CD4-positive, alpha-beta T cell (primary cell): ENCODE measurements at regions of chr7 and their contacts with region 1.

Region 1: GRCh38 chr7:12686894-12687717 is at the start of gene ARL4A:
- DNase-seq: peak; percentile 76 to 93 (median 84)
- ATAC-seq: peak; percentile 48
- H3K4me3 ChIP-seq: peak within 1 kb of the TSS; percentile 89
- H3K4me3 Mint-ChIP-seq: peak within 1 kb of the TSS; percentile 96
- H3K27ac ChIP-seq: peak within 1 kb of the TSS; percentile 90 to 98
- H3K27ac Mint-ChIP-seq: peak within 1 kb of the TSS; percentile 89
- H3K4me1 ChIP-seq: peaks cover 24% of the 10 kb centered on the region
- H3K4me1 Mint-ChIP-seq: peaks cover 39% of the 10 kb centered on the region
- H3K27me3 ChIP-seq: no peaks in the 10 kb centered on the region
- H3K27me3 Mint-ChIP-seq: no peaks in the 10 kb centered on the region
- CTCF ChIP-seq: peak; percentile 28
- total RNA-seq, gene ARL4A: 72.5 to 75.9 TPM

Region 2: GRCh38 chr7:12007576-12007975 is 679.5 kb before region 1 on chr7:
- CTCF ChIA-PET with region 1: no interaction called
- POLR2A ChIA-PET with region 1: no interaction called
- intact Hi-C with region 1: no loop called
- DNase-seq: no peak
- ATAC-seq: no peak
- H3K4me3 ChIP-seq: no peak overlapping the region
- H3K4me3 Mint-ChIP-seq: no peak overlapping the region
- H3K27ac ChIP-seq: no peak overlapping the region
- H3K27ac Mint-ChIP-seq: no peak overlapping the region
- H3K4me1 ChIP-seq: no peaks in the 10 kb centered on the region
- H3K4me1 Mint-ChIP-seq: no peaks in the 10 kb centered on the region
- H3K27me3 ChIP-seq: no peaks in the 10 kb centered on the region
- H3K27me3 Mint-ChIP-seq: no peaks in the 10 kb centered on the region
- CTCF ChIP-seq: no peak

Region 3: DNA sequence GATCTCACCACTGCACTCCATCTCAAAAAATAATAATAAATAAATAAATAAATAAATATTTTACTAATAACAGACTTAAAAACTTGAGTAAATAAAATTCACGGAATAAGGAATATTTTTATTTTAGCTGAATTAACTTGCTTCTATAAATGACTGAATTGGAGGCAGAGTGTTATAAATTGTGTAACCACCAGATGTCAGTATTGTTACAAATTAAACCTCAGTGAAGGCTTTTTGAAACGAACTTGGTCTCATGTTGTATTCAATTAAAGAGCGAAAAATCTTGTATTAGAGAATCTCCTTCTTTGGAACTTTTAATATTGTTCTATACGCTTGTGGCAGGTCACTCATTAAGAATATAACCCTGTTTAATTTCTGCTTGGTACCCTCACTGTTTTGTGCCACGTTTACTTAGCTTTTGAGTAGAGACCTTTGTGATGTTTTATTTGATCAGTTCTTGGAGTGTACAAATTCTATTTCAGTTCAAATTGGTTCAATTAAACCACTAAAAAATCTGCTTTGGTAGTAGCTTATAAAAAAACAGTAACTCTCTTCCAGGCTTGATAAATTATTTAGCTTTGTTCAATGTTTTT is 162.2 kb before region 1 on chr7:
- CTCF ChIA-PET with region 1: no interaction called
- POLR2A ChIA-PET with region 1: no interaction called
- intact Hi-C with region 1: loop called (anchors 10 kb)
- DNase-seq: peak in 3 of 14 experiments; percentile 43 to 60 (median 54)
- ATAC-seq: no peak
- H3K4me3 ChIP-seq: no peak overlapping the region
- H3K4me3 Mint-ChIP-seq: no peak overlapping the region
- H3K27ac ChIP-seq: no peak overlapping the region
- H3K27ac Mint-ChIP-seq: no peak overlapping the region
- H3K4me1 ChIP-seq: no peaks in the 10 kb centered on the region
- H3K4me1 Mint-ChIP-seq: no peaks in the 10 kb centered on the region
- H3K27me3 ChIP-seq: peaks cover 0 to 12% of the 10 kb centered on the region in 2 experiments
- H3K27me3 Mint-ChIP-seq: peaks cover 38% of the 10 kb centered on the region
- CTCF ChIP-seq: peak; percentile 80

Region 4: DNA sequence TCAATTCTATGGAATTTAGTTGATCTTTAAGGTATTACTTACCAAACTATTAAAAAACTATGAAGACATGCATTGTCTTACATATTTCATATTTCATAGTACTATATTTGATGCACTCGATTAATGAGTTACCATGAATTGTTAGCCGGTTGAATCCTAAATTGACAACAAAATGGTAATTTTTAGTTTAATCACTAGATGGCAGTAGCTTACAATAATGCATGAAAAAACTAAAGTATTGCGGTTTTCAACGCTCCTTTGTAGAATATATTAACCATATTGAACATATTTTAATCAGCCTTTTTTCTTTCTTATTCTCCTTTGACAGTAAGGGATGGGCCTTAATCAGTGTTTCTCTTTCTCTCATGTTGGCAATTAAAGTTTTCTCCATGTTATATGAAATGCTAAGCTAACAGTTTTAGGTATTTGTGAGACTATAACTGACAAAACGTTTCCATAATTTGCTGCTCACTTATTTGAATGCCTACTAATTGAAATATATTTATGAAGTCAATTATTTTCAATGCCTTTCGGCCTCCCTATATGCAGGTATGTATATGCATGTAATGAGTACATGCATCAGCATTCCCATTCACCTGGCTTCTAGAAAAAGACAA is 48.1 kb before region 1 on chr7:
- CTCF ChIA-PET with region 1: interaction called, 13 read pairs
- POLR2A ChIA-PET with region 1: interaction called, 14 read pairs
- intact Hi-C with region 1: loop called in 1 of 2 experiments (anchors 5 kb)
- DNase-seq: peak in 3 of 14 experiments; percentile 62 to 67 (median 66)
- ATAC-seq: peak; percentile 55
- H3K4me3 ChIP-seq: no peak overlapping the region
- H3K4me3 Mint-ChIP-seq: no peak overlapping the region
- H3K27ac ChIP-seq: no peak overlapping the region
- H3K27ac Mint-ChIP-seq: no peak overlapping the region
- H3K4me1 ChIP-seq: peaks cover 4% of the 10 kb centered on the region
- H3K4me1 Mint-ChIP-seq: peaks cover 29% of the 10 kb centered on the region
- H3K27me3 ChIP-seq: no peaks in the 10 kb centered on the region
- H3K27me3 Mint-ChIP-seq: no peaks in the 10 kb centered on the region
- CTCF ChIP-seq: peak; percentile 81

Region 5: DNA sequence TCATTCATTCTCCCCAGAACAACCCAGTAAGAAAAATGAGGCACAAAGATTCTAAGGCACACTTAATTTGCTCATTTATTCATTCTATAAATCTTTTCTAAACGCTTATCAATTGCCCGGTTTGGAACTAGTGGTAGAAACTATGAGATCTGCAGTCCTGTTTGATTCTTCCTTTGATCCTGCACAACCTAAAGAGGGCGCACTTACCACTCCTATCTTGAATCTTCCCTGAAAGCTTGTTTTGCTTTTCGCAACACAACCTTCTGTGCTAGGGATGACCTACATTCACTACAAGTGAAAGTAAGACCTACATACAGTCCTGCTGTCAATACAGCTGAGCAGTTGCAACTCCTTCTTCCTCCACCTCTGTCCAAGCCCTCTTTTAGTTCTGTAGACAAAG is 12.3 kb before region 1 on chr7:
- CTCF ChIA-PET with region 1: interaction called, 28 read pairs
- POLR2A ChIA-PET with region 1: interaction called, 14 read pairs
- intact Hi-C with region 1: no loop called
- DNase-seq: peak in 11 of 14 experiments; percentile 10 to 86 (median 25)
- ATAC-seq: peak; percentile 92
- H3K4me3 ChIP-seq: no peak overlapping the region
- H3K4me3 Mint-ChIP-seq: no peak overlapping the region
- H3K27ac ChIP-seq: no peak overlapping the region
- H3K27ac Mint-ChIP-seq: no peak overlapping the region
- H3K4me1 ChIP-seq: peaks cover 7% of the 10 kb centered on the region
- H3K4me1 Mint-ChIP-seq: peaks cover 17% of the 10 kb centered on the region
- H3K27me3 ChIP-seq: no peaks in the 10 kb centered on the region
- H3K27me3 Mint-ChIP-seq: no peaks in the 10 kb centered on the region
- CTCF ChIP-seq: peak; percentile 58

Region 6: GRCh38 chr7:12729112-12729511 is 42.0 kb after region 1 on chr7:
- CTCF ChIA-PET with region 1: interaction called, 19 read pairs
- POLR2A ChIA-PET with region 1: interaction called, 14 read pairs
- intact Hi-C with region 1: loop called in 1 of 2 experiments (anchors 2 kb)
- DNase-seq: peak in 1 of 14 experiments; percentile 7
- ATAC-seq: no peak
- H3K4me3 ChIP-seq: no peak overlapping the region
- H3K4me3 Mint-ChIP-seq: no peak overlapping the region
- H3K27ac ChIP-seq: no peak overlapping the region
- H3K27ac Mint-ChIP-seq: no peak overlapping the region
- H3K4me1 ChIP-seq: peaks cover 8% of the 10 kb centered on the region
- H3K4me1 Mint-ChIP-seq: peaks cover 24% of the 10 kb centered on the region
- H3K27me3 ChIP-seq: no peaks in the 10 kb centered on the region
- H3K27me3 Mint-ChIP-seq: no peaks in the 10 kb centered on the region
- CTCF ChIP-seq: no peak

Region 7: DNA sequence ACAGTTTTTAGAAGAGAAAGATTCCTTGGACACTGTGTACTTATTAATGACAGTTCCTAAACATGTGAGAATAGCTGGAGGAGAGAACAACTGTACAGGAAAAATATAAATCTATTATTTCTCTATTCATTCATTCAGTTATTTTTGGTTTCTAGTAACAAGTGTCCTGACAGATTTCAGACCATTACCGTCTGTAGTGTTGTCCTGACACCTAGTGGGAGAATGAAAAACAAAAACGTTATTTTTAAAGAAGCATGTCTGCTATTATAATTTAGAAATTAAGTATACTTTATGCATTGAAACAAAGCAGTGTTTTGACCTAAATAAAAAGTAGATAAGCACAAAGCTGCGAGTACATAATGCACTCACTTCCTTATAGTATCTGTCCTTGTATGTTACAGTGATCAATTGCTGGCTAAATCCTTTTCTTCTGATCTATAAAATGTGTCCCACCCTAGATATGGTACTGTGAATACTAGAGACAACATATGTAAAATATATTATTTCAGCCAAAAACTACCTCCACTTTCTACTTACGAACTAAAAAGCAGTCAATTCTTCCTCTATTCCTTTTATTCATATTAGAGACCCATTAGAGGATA is 575.9 kb after region 1 on chr7:
- CTCF ChIA-PET with region 1: interaction called, 6 read pairs
- POLR2A ChIA-PET with region 1: no interaction called
- intact Hi-C with region 1: loop called (anchors 2 kb)
- DNase-seq: peak in 4 of 14 experiments; percentile 3 to 62 (median 56)
- ATAC-seq: peak; percentile 46
- H3K4me3 ChIP-seq: no peak overlapping the region
- H3K4me3 Mint-ChIP-seq: no peak overlapping the region
- H3K27ac ChIP-seq: no peak overlapping the region
- H3K27ac Mint-ChIP-seq: no peak overlapping the region
- H3K4me1 ChIP-seq: no peaks in the 10 kb centered on the region
- H3K4me1 Mint-ChIP-seq: no peaks in the 10 kb centered on the region
- H3K27me3 ChIP-seq: peaks cover 0 to 2% of the 10 kb centered on the region in 2 experiments
- H3K27me3 Mint-ChIP-seq: peaks cover 8% of the 10 kb centered on the region
- CTCF ChIP-seq: peak; percentile 63

Region 8: DNA sequence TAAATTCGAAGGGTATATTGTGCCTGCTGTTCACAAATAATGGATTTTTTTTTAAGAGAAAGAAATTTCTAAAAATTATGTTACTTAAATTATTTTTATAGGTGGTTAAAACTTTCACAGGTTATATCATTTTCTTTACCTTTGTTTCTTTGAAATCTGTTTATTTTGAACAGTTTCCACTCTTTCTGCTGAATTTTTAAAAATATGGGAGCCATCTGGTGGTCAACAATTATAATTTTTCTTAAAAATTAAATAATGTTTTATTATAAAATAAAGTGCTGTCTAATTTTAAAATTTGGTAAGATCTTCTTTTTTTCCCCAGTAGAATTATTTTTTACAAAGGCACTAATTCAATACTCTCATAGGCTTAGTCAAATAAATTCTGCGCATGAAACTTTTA is 1038.5 kb after region 1 on chr7:
- CTCF ChIA-PET with region 1: no interaction called
- POLR2A ChIA-PET with region 1: no interaction called
- intact Hi-C with region 1: loop called in 1 of 2 experiments (anchors 10 kb)
- DNase-seq: no peak
- ATAC-seq: no peak
- H3K4me3 ChIP-seq: no peak overlapping the region
- H3K4me3 Mint-ChIP-seq: no peak overlapping the region
- H3K27ac ChIP-seq: no peak overlapping the region
- H3K27ac Mint-ChIP-seq: no peak overlapping the region
- H3K4me1 ChIP-seq: no peaks in the 10 kb centered on the region
- H3K4me1 Mint-ChIP-seq: no peaks in the 10 kb centered on the region
- H3K27me3 ChIP-seq: no peaks in the 10 kb centered on the region
- H3K27me3 Mint-ChIP-seq: no peaks in the 10 kb centered on the region
- CTCF ChIP-seq: no peak